Esophagus squamous epithelium (tissue), 5 donors: ENCODE measurements at regions of chr1 and their contacts with region 1.

Region 1: DNA sequence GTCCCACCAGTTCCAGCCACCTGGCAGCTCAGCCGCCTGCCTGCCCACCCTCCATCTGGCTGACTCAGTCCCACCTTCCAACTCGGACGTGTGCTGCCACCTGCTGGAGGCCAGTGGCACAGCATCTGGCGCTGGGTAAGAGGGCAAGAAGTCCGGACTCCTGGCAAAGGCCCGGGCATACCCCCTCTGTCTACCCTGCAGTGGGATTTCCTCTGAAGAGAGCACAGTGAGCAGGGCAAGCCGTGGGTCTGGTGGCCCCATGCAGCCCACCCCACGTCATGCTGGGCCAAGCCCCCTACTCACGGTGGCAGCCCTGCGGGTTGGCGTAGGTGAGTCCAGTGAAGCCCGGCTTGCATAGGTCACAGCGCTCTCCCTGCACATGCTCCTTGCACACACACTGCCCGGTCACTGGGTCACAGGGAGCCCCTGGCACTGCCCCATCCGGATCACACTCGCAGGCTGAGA is 24.5 kb downstream of the LAMB3 start:
- DNase-seq: no peak
- H3K4me3 ChIP-seq: no peak overlapping the region
- H3K27ac ChIP-seq: peak overlapping the region in 2 of 4 donors; percentile 39 to 67
- H3K4me1 ChIP-seq: peaks cover 17 to 75% (median 39%) of the 10 kb centered on the region in 3 donors
- H3K27me3 ChIP-seq: peaks cover 0 to 6% (median 0%) of the 10 kb centered on the region in 4 donors
- CTCF ChIP-seq: peak; percentile 79 to 96 (median 90)
- POLR2A ChIP-seq: no peak

Region 2: DNA sequence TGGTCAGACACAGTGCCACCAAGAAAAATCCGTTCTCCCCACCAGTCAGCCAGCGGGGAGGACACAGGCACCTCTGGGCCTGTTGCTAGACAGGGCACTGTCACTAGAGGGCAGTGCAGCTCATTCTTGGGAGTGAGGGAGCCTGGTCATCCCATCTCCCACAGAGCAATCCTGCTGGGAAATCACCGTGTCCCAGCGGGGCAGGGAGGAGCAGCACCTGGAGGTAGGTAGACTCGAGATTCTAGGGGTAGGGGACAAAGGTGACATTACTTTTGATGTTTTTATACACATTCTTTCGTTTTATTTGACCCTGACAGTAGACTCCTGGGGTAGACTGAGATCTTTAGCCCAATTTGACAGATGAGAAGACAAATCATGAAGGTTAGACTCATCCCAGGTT is 51.0 kb before region 1 on chr1:
- intact Hi-C with region 1: loop called (anchors 10 kb)
- DNase-seq: no peak
- H3K4me3 ChIP-seq: no peak overlapping the region
- H3K27ac ChIP-seq: no peak overlapping the region
- H3K4me1 ChIP-seq: peaks cover 0 to 5% (median 0%) of the 10 kb centered on the region in 3 donors
- H3K27me3 ChIP-seq: peaks cover 0 to 48% (median 0%) of the 10 kb centered on the region in 4 donors
- CTCF ChIP-seq: peak; percentile 80 to 93 (median 87)
- POLR2A ChIP-seq: no peak